ENCODE measurements at regions of chr5 and their contacts with region 1.

Region 1: DNA sequence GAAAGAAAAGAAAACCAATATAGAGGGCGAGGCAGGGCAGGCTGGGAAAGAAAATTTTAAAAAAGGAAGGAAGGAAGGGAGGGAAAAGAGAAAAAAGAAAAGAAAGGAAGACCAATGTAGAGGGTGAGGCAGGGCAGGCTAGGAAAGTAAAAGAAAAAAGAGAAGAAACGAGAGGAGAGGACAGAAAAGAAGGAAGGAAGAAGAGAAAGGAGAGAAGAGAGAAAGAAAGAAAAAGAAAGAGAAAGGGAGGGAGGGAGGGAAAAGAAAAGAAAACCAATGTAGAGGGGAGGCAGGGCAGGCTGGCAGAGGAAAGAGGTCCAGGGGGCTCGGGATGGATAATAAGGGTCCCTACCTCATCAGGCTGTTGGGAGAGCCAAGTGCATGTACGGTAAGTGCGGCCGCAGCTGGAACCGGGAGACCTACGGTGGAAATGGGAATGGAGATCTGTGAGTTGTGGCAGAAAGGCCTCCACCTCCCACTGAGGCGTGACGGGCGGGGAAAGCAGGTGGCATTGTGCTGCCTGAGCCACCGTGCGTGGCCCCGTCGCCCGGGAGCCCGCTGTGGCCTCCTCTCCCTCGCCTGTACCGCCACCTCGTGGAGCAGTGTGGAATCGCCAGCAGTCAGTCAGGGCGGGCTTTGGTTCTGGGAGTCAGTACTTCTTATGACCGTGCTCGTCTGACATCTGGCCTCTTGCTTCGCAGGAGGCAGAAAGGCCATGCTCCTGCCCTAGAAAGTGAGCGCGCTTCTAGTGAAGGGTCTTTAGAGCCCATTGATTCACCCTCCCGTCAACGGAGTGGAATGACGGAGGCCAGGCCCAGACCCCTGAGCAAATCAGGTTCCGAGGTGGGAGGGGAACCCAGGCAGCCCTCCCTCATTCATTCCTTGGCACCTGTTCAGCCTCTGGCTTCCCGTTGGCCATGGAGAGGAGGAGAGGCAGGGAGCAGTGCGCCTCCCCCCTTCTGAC is 10.4 kb upstream of the NHP2 start:
- DNase-seq: peak; percentile 84
- H3K4me3 Mint-ChIP-seq: no peak overlapping the region
- H3K27ac Mint-ChIP-seq: no peak overlapping the region
- H3K4me1 Mint-ChIP-seq: no peaks in the 10 kb centered on the region
- H3K27me3 Mint-ChIP-seq: peaks cover 19% of the 10 kb centered on the region

Region 2: GRCh38 chr5:178075840-178076548 is 88.1 kb before region 1 on chr5:
- intact Hi-C with region 1: loop called (anchors 1 kb)
- DNase-seq: peak; percentile 62
- H3K4me3 Mint-ChIP-seq: no peak overlapping the region
- H3K27ac Mint-ChIP-seq: no peak overlapping the region
- H3K4me1 Mint-ChIP-seq: peaks cover 6% of the 10 kb centered on the region
- H3K27me3 Mint-ChIP-seq: peaks cover 9% of the 10 kb centered on the region

Region 3: GRCh38 chr5:178120868-178121357 is 43.1 kb before region 1 on chr5:
- intact Hi-C with region 1: loop called (anchors 1 kb)
- DNase-seq: peak; percentile 75
- H3K4me3 Mint-ChIP-seq: no peak overlapping the region
- H3K27ac Mint-ChIP-seq: no peak overlapping the region
- H3K4me1 Mint-ChIP-seq: peaks cover 13% of the 10 kb centered on the region
- H3K27me3 Mint-ChIP-seq: peaks cover 11% of the 10 kb centered on the region

Region 4: GRCh38 chr5:178146020-178146820 is 17.8 kb before region 1 on chr5:
- intact Hi-C with region 1: loop called (anchors 1 kb)
- DNase-seq: peak; percentile 49
- H3K4me3 Mint-ChIP-seq: no peak overlapping the region
- H3K27ac Mint-ChIP-seq: no peak overlapping the region
- H3K4me1 Mint-ChIP-seq: peaks cover 50% of the 10 kb centered on the region
- H3K27me3 Mint-ChIP-seq: no peaks in the 10 kb centered on the region